ENCODE measurements at regions of chr1 and their contacts with region 1.

Region 1: GRCh38 chr1:55375617-55376258 is 160.6 kb upstream of the USP24 start:
- DNase-seq: peak in 1 of 2 experiments; percentile 64
- H3K4me3 ChIP-seq: no peak overlapping the region
- H3K27ac ChIP-seq: no peak overlapping the region
- H3K4me1 ChIP-seq: no peaks in the 10 kb centered on the region
- H3K27me3 ChIP-seq: no peaks in the 10 kb centered on the region; a peak in 1 of 7 replicates
- CTCF ChIP-seq: peak; percentile 47 to 82 (median 63)
- EP300 ChIP-seq: no peak
- POLR2A ChIP-seq: no peak
- RAD21 ChIP-seq: peak; percentile 61 to 67

Region 2: GRCh38 chr1:55304229-55304740 is 71.5 kb before region 1 on chr1:
- CTCF ChIA-PET with region 1: interaction called, 12 read pairs
- POLR2A ChIA-PET with region 1: no interaction called
- DNase-seq: no peak
- H3K4me3 ChIP-seq: no peak overlapping the region
- H3K27ac ChIP-seq: no peak overlapping the region
- H3K4me1 ChIP-seq: no peaks in the 10 kb centered on the region; a peak in 1 of 7 replicates
- H3K27me3 ChIP-seq: no peaks in the 10 kb centered on the region
- CTCF ChIP-seq: no peak
- EP300 ChIP-seq: no peak
- POLR2A ChIP-seq: no peak
- RAD21 ChIP-seq: no peak

Region 3: GRCh38 chr1:55362558-55362957 is 13.2 kb before region 1 on chr1:
- CTCF ChIA-PET with region 1: interaction called, 50 read pairs
- POLR2A ChIA-PET with region 1: no interaction called
- DNase-seq: no peak
- H3K4me3 ChIP-seq: no peak overlapping the region
- H3K27ac ChIP-seq: no peak overlapping the region
- H3K4me1 ChIP-seq: no peaks in the 10 kb centered on the region
- H3K27me3 ChIP-seq: no peaks in the 10 kb centered on the region
- CTCF ChIP-seq: no peak
- EP300 ChIP-seq: no peak
- POLR2A ChIP-seq: no peak
- RAD21 ChIP-seq: no peak

Region 4: GRCh38 chr1:55839626-55840025 is 463.9 kb after region 1 on chr1:
- CTCF ChIA-PET with region 1: interaction called, 12 read pairs
- POLR2A ChIA-PET with region 1: no interaction called
- DNase-seq: no peak
- H3K4me3 ChIP-seq: no peak overlapping the region
- H3K27ac ChIP-seq: no peak overlapping the region
- H3K4me1 ChIP-seq: no peaks in the 10 kb centered on the region
- H3K27me3 ChIP-seq: no peaks in the 10 kb centered on the region
- CTCF ChIP-seq: no peak
- EP300 ChIP-seq: no peak
- POLR2A ChIP-seq: no peak
- RAD21 ChIP-seq: no peak

Region 5: GRCh38 chr1:56578963-56579875 is 1203.5 kb after region 1 on chr1 and contains the start of gene PLPP3:
- CTCF ChIA-PET with region 1: interaction called, 11 read pairs
- POLR2A ChIA-PET with region 1: no interaction called
- DNase-seq: peak; percentile 70 to 80
- H3K4me3 ChIP-seq: peak within 1 kb of the TSS; percentile 79 to 98 (median 93)
- H3K27ac ChIP-seq: peak within 1 kb of the TSS; percentile 66; the same call in 1 of the 2 replicates
- H3K4me1 ChIP-seq: peaks cover 3 to 12% (median 6%) of the 10 kb centered on the region in 4 experiments; a peak in 6 of 7 replicates
- H3K27me3 ChIP-seq: no peaks in the 10 kb centered on the region
- CTCF ChIP-seq: peak; percentile 22 to 31 (median 23)
- EP300 ChIP-seq: no peak
- POLR2A ChIP-seq: peak; percentile 61 to 96
- RAD21 ChIP-seq: peak; percentile 41 to 44
- total RNA-seq, gene PLPP3: 30.6 and 33.2 TPM in 2 replicates

Measured in H1 (cell line).